ENCODE measurements at regions of chr14 and their contacts with region 1.

Region 1: DNA sequence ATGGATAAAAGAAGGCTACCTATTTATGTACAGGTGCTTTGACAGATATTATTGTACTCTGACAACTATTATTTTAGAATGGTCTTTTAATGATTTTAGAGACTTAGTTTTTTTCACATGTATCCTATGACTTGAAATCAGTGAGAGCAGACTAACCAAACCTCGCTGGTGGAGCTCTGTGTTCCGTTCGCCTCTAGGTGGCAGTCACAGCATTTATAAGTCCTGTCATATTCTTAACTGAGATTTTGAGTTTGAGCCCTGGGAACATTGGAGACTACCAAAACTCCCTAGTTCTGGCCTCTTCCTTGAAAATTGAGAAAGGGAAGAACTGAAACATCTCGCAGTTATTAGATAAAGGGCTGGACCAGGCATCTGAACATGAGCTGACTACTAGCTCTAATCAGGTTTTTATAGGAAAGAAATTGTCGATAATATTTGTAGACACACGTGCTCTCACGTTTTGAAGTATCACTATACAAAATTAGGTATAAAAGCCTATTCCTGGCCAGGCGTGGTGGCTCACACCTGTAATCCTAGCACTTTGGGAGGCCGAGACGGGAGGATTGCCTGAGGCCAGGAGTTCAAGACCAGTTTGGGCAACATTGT is 48.3 kb downstream of the TTLL5 start:
- DNase-seq: peak; percentile 54 to 70
- ATAC-seq: peak; percentile 48 to 63
- H3K4me3 ChIP-seq: no peak overlapping the region
- H3K27ac ChIP-seq: no peak overlapping the region
- H3K4me1 ChIP-seq: peaks cover 16 to 23% of the 10 kb centered on the region in 2 donors
- H3K27me3 ChIP-seq: no peaks in the 10 kb centered on the region
- CTCF ChIP-seq: peak; percentile 71 to 84 (median 74)
- POLR2A ChIP-seq: no peak

Region 2: DNA sequence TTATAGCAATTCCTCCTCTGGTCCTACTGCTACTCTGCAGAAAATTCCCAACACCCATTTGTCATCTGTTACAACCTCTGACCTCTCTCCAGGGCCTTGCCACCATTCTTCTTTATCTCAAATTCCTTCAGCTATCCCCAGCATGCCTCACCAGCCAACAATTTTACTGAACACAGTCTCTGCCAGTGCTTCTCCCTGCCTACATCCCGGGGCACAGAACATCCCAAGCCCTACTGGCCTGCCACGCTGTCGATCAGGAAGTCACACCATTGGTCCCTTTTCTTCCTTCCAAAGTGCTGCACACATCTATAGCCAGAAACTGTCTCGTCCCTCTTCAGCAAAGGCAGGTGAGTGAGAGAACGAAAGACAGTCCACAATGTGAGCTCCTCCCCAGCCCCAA is 73.9 kb after region 1 on chr14:
- in situ Hi-C with region 1: no loop called
- intact Hi-C with region 1: loop called (anchors 5 kb)
- DNase-seq: no peak
- ATAC-seq: peak in 1 of 2 donors; percentile 10
- H3K4me3 ChIP-seq: no peak overlapping the region
- H3K27ac ChIP-seq: peak overlapping the region in 3 of 4 donors; percentile 53 to 62 (median 56)
- H3K4me1 ChIP-seq: peaks cover 16 to 28% of the 10 kb centered on the region in 2 donors
- H3K27me3 ChIP-seq: no peaks in the 10 kb centered on the region
- CTCF ChIP-seq: no peak
- POLR2A ChIP-seq: no peak

Region 3: DNA sequence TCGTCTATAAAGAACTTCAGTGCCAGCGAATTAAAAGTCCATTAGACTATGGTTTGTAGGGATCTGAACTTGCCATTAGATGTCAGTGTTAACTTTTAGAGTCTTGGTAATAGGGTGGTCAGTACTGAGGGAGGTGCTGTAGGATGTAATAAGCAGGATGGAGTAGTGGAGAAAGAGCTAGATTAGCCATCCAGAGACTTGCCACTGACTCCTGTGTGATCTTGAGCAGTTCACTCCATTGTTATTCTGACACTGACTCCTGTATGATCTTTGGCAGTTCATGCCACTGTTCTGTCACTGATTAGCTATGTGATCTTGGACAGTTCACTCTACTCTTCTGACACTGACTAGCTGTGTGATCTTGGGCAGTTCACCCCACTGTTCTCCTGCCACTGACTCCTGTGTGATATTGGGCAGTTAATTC is 85.3 kb after region 1 on chr14:
- in situ Hi-C with region 1: no loop called
- intact Hi-C with region 1: loop called (anchors 1 kb)
- DNase-seq: no peak
- ATAC-seq: peak; percentile 58 to 89
- H3K4me3 ChIP-seq: no peak overlapping the region
- H3K27ac ChIP-seq: no peak overlapping the region
- H3K4me1 ChIP-seq: no peaks in the 10 kb centered on the region
- H3K27me3 ChIP-seq: no peaks in the 10 kb centered on the region
- CTCF ChIP-seq: peak in 1 of 5 experiments; percentile 15
- POLR2A ChIP-seq: no peak

Region 4: GRCh38 chr14:75906676-75907280 is 197.5 kb after region 1 on chr14:
- in situ Hi-C with region 1: loop called in 2 of 4 experiments (anchors 5 to 10 kb)
- intact Hi-C with region 1: loop called (anchors 1 kb)
- DNase-seq: peak; percentile 35 to 37
- ATAC-seq: peak in 1 of 2 donors; percentile 41
- H3K4me3 ChIP-seq: no peak overlapping the region
- H3K27ac ChIP-seq: peak overlapping the region; percentile 55 to 81 (median 70)
- H3K4me1 ChIP-seq: peaks cover 29 to 44% of the 10 kb centered on the region in 2 donors
- H3K27me3 ChIP-seq: no peaks in the 10 kb centered on the region
- CTCF ChIP-seq: peak; percentile 79 to 91 (median 88)
- POLR2A ChIP-seq: no peak

Region 5: GRCh38 chr14:76386915-76387782 is 677.8 kb after region 1 on chr14:
- in situ Hi-C with region 1: loop called in 1 of 4 experiments (anchors 25 kb)
- intact Hi-C with region 1: no loop called
- DNase-seq: peak; percentile 10 to 56
- ATAC-seq: peak; percentile 79 to 91
- H3K4me3 ChIP-seq: no peak overlapping the region
- H3K27ac ChIP-seq: no peak overlapping the region
- H3K4me1 ChIP-seq: no peaks in the 10 kb centered on the region
- H3K27me3 ChIP-seq: no peaks in the 10 kb centered on the region
- CTCF ChIP-seq: peak; percentile 69 to 92 (median 86)
- POLR2A ChIP-seq: no peak

Measured in gastrocnemius medialis (tissue), 4 donors.